Ascending aorta (tissue), 2 donors: ENCODE measurements at regions of chr3 and their contacts with region 1.

Region 1: GRCh38 chr3:119676771-119677640 is at the start of gene COX17:
- DNase-seq: peak; percentile 80 to 97
- H3K4me3 ChIP-seq: peak within 1 kb of the TSS; percentile 56 to 80
- H3K27ac ChIP-seq: peak within 1 kb of the TSS; percentile 93
- H3K4me1 ChIP-seq: peaks cover 3 to 18% of the 10 kb centered on the region in 2 donors
- H3K27me3 ChIP-seq: no peaks in the 10 kb centered on the region
- CTCF ChIP-seq: no peak
- total RNA-seq, gene COX17: 12.5 TPM

Region 2: DNA sequence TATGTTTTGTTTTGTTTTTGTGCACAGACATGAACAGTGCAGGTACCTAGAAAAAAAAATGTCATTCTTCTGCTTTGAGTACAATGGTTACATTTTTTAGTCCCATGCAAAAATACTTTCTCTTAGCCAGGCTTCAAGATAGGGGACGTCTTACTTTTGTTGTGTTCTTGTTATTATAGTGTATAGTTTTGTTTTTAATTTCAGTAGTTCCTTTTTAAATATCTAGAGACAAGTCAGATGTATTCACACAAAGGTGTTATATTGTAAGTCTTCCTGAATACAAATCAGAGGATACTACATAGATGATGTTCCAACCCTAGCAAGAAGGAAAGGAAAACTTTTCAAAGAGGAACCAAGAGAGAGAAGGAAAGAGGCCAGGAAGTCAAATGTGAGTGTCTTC is 613.5 kb before region 1 on chr3:
- intact Hi-C with region 1: no loop called
- DNase-seq: no peak
- H3K4me3 ChIP-seq: no peak overlapping the region
- H3K27ac ChIP-seq: no peak overlapping the region
- H3K4me1 ChIP-seq: no peaks in the 10 kb centered on the region
- H3K27me3 ChIP-seq: no peaks in the 10 kb centered on the region
- CTCF ChIP-seq: no peak

Region 3: GRCh38 chr3:119463171-119464169 is 213.5 kb before region 1 on chr3 and contains the start of gene TMEM39A:
- intact Hi-C with region 1: loop called (anchors 1 kb)
- DNase-seq: peak; percentile 97 to 100
- H3K4me3 ChIP-seq: peak within 1 kb of the TSS; percentile 84 to 91
- H3K27ac ChIP-seq: peak within 1 kb of the TSS; percentile 87 to 92
- H3K4me1 ChIP-seq: peaks cover 4 to 20% of the 10 kb centered on the region in 2 donors
- H3K27me3 ChIP-seq: no peaks in the 10 kb centered on the region
- CTCF ChIP-seq: no peak
- total RNA-seq, gene TMEM39A: 115 TPM

Region 4: GRCh38 chr3:119524931-119525662 is 151.9 kb before region 1 on chr3:
- intact Hi-C with region 1: loop called (anchors 1 kb)
- DNase-seq: no peak
- H3K4me3 ChIP-seq: no peak overlapping the region
- H3K27ac ChIP-seq: peak overlapping the region in 1 of 2 donors; percentile 37
- H3K4me1 ChIP-seq: no peaks in the 10 kb centered on the region
- H3K27me3 ChIP-seq: no peaks in the 10 kb centered on the region
- CTCF ChIP-seq: peak in 2 of 3 experiments; percentile 31 to 51

Region 5: DNA sequence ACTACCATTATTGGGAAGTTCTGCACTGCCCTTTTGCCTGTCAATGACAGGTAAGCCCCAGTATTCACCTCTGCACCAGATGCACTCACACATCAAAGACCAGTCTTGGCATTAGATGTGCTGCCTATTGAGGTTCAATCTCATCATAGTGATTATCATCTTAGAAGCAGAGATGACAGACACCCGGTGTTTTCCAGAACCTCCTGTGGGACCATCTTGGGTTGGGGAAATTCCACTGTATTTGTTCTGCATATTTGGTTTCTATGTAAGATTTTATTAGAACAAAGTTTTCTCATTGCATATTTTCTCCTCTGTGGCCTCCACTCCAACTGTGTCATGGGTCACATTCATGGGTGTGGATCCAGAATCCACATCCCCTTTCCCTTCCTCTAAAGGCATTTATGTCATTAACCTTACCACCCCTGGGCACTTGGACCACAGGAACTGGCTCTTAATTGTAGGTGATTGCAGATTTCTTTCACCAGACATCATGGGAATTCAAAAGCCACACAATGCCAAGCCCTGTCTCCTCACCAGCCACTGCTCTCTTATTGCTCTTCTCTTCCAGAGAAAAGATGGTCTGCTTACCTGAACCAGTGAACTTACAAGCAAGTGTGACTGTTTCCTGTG is 48.1 kb before region 1 on chr3:
- intact Hi-C with region 1: loop called (anchors 2 kb)
- DNase-seq: peak in 1 of 2 donors; percentile 63
- H3K4me3 ChIP-seq: no peak overlapping the region
- H3K27ac ChIP-seq: peak overlapping the region; percentile 74 to 85
- H3K4me1 ChIP-seq: peaks cover 4 to 54% of the 10 kb centered on the region in 2 donors
- H3K27me3 ChIP-seq: no peaks in the 10 kb centered on the region
- CTCF ChIP-seq: no peak

Region 6: DNA sequence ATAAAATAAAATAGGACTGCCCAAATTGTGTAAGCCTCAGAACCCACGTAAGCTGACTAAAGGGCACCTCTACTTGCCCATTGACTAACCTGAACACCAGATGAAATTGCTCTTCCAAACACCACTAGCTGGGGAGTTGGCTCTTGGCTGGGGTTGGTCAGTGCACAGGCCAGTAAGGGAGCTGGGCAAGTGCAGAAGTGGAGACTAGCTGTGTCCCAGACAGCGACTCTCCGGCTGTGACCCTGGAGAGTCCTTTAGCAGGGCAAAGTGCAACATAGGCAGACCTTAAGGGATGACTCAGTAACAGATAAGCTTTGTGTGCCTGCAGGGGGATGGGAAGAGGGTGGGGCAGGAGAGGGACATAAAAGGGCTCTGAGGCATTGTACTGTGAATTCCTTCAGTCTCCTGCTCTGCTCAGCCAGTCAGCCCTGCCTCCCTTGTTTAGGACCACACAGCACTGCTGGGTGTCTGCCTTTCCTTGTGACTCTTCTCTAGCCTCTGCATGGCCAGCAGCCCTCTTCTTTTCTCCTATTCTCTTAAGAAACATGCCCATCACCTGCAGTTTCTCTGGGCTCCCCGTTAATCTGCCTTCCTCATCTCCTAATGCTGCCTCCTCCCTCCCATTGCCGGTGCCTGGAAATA is 118.1 kb after region 1 on chr3:
- intact Hi-C with region 1: no loop called
- DNase-seq: no peak
- H3K4me3 ChIP-seq: no peak overlapping the region
- H3K27ac ChIP-seq: no peak overlapping the region
- H3K4me1 ChIP-seq: no peaks in the 10 kb centered on the region
- H3K27me3 ChIP-seq: no peaks in the 10 kb centered on the region
- CTCF ChIP-seq: no peak